Mammary epithelial cell (primary cell): ENCODE measurements at regions of chr9 and their contacts with region 1.

Region 1: DNA sequence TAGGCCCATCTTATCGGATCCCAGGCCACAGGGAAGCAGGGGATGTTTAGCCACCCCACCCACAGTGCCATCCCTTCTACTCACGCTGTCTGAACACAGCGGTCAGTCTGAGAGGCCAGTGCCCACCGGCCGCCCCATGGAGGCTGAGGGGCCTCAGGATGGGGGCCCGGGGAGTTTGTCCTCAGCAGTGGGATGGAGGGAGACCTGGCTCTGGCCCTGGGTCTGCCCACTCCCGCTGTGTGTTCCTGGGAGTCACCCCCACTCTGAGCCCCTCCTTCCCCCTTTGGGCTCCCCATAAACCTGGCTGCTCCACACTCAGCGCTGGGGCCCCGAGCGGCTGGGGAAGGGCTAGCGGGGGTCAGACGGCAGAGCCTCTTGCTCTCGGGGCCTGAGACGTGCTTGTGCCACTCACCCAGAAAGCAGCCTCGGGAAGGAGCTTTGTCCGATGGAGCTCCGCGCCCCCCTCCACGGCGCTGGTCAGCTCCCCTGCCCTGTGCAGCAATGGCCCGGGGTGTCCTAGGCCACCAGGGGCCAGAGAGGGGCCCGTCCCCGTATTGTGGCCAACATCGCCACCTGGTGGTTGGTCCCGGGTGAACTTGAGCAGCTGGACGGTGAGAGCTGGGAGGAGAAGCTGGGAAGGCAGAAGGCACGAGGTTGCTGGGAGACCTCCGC is 10.9 kb upstream of the LAMC3 start:
- DNase-seq: peak; percentile 48
- H3K4me3 ChIP-seq: no peak overlapping the region
- H3K27ac ChIP-seq: no peak overlapping the region
- H3K4me1 ChIP-seq: peaks cover 13% of the 10 kb centered on the region
- H3K27me3 ChIP-seq: no peaks in the 10 kb centered on the region
- CTCF ChIP-seq: peak; percentile 78 to 86

Region 2: DNA sequence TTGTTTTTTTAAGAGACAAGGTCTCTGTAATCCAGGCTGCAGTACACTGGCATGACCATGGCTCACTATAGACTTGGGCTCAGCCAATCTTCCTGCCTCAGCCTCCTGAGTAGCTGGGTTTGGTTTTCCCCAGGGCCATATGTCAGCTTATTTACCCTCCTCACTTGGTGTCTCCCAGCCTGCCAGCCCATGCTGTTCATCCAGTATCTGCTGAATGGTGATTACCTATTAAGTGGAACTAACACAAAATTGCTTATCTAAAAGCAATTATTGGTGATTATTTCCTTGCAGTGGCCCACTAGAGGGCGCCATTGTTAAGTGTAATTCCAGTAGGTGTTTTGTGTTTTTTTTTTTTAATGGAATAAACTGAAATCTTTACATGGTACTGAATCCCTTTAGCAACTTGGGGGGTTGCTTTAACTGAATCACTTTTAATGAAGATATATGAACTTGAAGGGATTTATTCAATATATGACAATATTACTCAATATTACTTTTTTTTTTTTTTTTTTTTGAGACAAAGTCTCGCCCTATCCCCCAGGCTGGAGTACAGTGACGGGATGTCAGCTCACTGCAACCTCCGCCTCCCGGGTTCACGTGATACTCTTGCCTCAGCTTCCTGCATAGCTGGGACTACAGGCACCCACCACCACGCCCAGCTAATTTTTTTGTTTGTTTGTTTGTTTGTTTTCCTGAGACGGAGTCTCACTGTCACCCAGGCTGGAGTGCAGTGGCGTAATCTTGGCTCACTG is 290.7 kb before region 1 on chr9:
- CTCF ChIA-PET with region 1: no interaction called
- dilution Hi-C with region 1: no loop called
- in situ Hi-C with region 1: loop called in 1 of 2 experiments (anchors 25 kb)
- intact Hi-C with region 1: loop called (anchors 2 kb)
- DNase-seq: peak; percentile 32
- H3K4me3 ChIP-seq: no peak overlapping the region
- H3K27ac ChIP-seq: no peak overlapping the region
- H3K4me1 ChIP-seq: no peaks in the 10 kb centered on the region
- H3K27me3 ChIP-seq: no peaks in the 10 kb centered on the region
- CTCF ChIP-seq: peak; percentile 65 to 66

Region 3: DNA sequence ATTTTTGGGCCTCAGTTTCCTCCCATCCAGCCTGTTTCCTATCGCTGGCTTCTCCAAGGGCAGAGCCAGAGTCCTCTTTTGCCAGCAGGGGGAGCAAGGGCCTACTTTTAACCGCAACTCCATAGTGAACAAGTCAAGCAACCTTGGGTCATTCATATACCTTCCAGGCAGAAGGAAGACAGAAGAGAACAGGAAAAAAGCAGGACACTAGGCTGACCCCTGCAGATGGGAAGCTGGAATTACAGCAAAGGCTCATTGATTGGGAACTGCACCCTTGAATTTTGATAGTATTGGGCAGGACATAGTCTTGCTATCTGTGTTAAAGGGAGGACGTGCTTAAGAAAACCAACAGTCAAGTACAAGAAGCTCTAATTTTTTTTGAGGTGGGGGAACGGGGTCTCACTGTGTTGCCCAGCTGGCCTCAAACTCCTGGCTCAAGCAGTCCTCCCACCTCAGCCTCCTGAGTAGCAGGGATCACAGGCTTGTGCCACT is 131.5 kb before region 1 on chr9:
- CTCF ChIA-PET with region 1: interaction called, 6 read pairs
- dilution Hi-C with region 1: no loop called
- in situ Hi-C with region 1: no loop called
- intact Hi-C with region 1: loop called (anchors 1 kb)
- DNase-seq: peak; percentile 87
- H3K4me3 ChIP-seq: peak overlapping the region in 1 of 3 experiments; percentile 43
- H3K27ac ChIP-seq: no peak overlapping the region
- H3K4me1 ChIP-seq: peaks cover 4% of the 10 kb centered on the region
- H3K27me3 ChIP-seq: no peaks in the 10 kb centered on the region
- CTCF ChIP-seq: peak; percentile 96 to 99

Region 4: DNA sequence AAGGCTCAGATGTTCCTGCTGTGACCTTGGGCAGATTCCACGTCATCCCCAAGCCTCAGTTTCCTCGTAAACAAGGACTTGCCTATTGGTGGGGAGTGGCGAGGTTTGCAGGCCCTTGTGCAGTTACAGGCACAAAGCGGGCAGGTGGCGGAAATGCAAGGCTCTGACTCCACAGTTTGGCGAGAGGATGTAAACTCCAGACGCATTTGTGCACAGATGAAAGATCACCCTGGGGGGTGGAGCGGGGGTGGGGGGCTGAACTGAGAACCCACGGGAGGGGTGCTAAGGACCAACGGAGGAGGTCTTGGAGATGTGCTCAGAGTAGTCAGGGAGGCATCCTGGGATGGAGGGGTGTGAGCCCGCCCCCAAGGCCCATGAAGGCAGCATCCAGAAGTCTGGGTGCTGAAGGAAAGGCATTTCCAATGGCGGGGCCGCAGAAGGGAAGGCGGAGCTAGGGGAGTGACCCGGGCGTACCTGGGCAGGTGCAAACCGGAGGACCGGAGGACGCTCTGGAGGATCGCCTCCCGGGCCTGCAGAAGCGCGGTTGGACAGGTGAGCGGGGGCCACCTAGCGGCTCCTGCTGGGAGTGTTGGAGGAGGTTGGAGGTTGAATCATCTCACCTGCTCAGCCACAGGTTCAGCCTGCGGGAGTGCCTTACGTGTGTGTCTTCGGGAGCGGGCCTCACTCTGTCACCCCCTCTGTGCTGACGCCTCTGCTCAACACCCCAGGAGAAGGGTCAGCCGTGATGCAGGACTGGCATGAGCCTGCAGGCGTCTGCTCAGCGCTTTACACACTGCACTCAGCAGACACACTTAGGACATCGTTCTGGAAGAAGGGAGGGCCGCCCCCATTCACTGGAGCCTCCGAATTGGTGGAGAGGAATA is 57.1 kb before region 1 on chr9:
- CTCF ChIA-PET with region 1: no interaction called
- dilution Hi-C with region 1: no loop called
- in situ Hi-C with region 1: loop called in 1 of 2 experiments (anchors 5 kb)
- intact Hi-C with region 1: loop called (anchors 1 kb)
- DNase-seq: peak; percentile 91
- H3K4me3 ChIP-seq: no peak overlapping the region
- H3K27ac ChIP-seq: no peak overlapping the region
- H3K4me1 ChIP-seq: peaks cover 12% of the 10 kb centered on the region
- H3K27me3 ChIP-seq: no peaks in the 10 kb centered on the region
- CTCF ChIP-seq: peak; percentile 73 to 95